Upper lobe of right lung (tissue), 1 donor: ENCODE measurements at regions of chr1 and their contacts with region 1.

Region 1: GRCh38 chr1:172401892-172402291 is 18.6 kb upstream of the C1orf105 start:
- DNase-seq: no peak
- ATAC-seq: no peak
- H3K4me3 ChIP-seq: no peak overlapping the region
- H3K27ac ChIP-seq: no peak overlapping the region
- H3K4me1 ChIP-seq: peaks cover 7% of the 10 kb centered on the region
- H3K27me3 ChIP-seq: no peaks in the 10 kb centered on the region
- CTCF ChIP-seq: peak; percentile 10

Region 2: GRCh38 chr1:172002725-172003345 is 399.1 kb before region 1 on chr1:
- intact Hi-C with region 1: loop called (anchors 10 kb)
- DNase-seq: no peak
- ATAC-seq: no peak
- H3K4me3 ChIP-seq: no peak overlapping the region
- H3K27ac ChIP-seq: no peak overlapping the region
- H3K4me1 ChIP-seq: no peaks in the 10 kb centered on the region
- H3K27me3 ChIP-seq: no peaks in the 10 kb centered on the region
- CTCF ChIP-seq: peak; percentile 72